KBM-7 (cell line): ENCODE measurements at regions of chr20 and their contacts with region 1.

Region 1: DNA sequence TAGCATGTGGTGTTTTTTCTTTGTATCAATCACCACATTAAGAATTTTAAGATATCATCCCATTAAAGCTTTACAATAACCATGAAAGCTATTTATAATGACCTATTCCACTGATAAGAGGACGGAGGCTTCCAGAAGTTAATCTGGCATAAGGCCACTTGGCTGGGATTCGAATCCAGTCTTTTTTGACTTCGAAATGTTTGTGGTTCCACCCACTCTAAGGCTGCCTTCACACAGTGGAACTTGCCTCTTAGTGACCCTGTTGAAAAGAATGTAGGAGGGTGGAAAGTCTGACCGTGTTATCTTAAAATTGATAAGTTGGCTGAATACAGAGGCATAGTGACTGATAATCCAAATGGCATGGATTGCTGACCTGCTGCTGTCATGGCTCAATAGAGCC is 959.7 kb downstream of the KIF16B start:
- DNase-seq: no peak

Region 2: GRCh38 chr20:15515691-15516090 is 97.8 kb before region 1 on chr20:
- in situ Hi-C with region 1: loop called (anchors 25 kb)
- DNase-seq: no peak